Ovary (tissue), 10 donors: ENCODE measurements at regions of chr12 and their contacts with region 1.

Region 1: GRCh38 chr12:79690638-79691493 is at the start of gene PAWR:
- DNase-seq: peak; percentile 71 to 83 (median 78)
- H3K4me3 ChIP-seq: peak within 1 kb of the TSS; percentile 65
- H3K27ac ChIP-seq: peak within 1 kb of the TSS; percentile 92 to 98
- H3K4me1 ChIP-seq: no peaks in the 10 kb centered on the region
- H3K27me3 ChIP-seq: no peaks in the 10 kb centered on the region
- CTCF ChIP-seq: peak in 1 of 3 donors; percentile 25
- EP300 ChIP-seq: no peak
- POLR2A ChIP-seq: peak; percentile 59
- total RNA-seq, gene PAWR: 46.8 to 125 (median 75.6) TPM

Region 2: DNA sequence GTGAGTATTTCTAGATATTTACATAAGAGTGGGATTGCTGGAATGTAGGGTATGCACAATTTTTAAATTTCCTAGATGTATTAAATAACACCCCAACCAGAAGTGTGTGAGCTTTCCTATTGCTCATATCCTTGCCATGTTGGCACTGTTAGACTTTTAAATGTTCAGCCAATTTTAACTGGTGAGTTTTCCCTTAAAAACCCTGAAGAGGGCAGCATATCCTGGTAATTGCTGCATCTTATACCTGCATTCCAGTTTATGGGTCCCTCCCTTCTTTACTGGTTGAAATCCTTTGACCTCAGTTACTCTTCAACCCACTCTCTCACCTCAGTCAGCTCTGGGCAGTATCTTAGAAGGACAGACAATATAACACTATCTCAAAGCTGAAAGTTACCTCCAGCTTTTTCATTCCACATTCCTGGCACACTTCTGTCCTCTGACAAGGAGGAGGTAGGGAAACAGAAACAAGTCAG is 270.7 kb before region 1 on chr12:
- intact Hi-C with region 1: loop called in 1 of 4 experiments (anchors 10 kb)
- DNase-seq: no peak
- H3K4me3 ChIP-seq: no peak overlapping the region
- H3K27ac ChIP-seq: peak overlapping the region in 1 of 2 donors; percentile 38
- H3K4me1 ChIP-seq: peaks cover 9% of the 10 kb centered on the region
- H3K27me3 ChIP-seq: no peaks in the 10 kb centered on the region
- CTCF ChIP-seq: peak in 2 of 3 donors; percentile 39 to 54
- EP300 ChIP-seq: no peak
- POLR2A ChIP-seq: no peak

Region 3: DNA sequence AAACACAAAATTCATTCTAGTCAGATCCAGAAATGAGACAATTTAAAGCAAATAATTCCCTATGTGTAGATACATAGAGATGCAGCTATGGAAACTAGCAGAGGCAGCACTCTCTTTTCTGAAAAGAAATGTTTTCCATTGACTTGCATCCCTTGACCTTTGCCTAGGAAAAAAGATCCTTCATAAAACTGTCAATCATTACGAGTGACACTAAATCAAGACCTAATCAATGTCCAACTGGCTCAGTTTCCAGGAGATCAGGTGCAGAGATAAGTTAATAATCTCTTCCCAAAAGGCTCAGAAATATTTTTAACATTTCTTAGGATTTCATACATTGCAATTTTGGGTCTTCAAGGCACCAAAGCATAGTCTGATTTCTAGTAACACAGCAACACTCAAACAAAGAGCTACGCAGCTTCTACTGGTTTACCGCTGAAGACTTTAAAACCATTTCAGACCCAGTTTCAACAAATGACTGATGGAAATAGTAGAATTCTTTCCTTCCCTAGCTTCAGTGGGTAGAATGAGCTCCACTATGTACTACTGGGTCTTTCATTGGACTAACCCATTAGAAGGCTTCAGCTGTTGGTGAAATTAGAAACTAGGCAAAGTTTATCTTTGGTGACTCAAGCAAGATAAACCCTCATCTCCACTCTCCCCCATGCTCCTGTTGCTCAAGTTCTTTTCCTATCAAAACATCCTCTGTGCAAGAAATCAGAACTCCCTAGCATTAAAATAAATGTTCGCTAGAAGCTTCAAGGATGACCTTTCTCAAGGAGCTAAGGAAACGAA is 159.5 kb before region 1 on chr12:
- intact Hi-C with region 1: no loop called
- DNase-seq: no peak
- H3K4me3 ChIP-seq: no peak overlapping the region
- H3K27ac ChIP-seq: no peak overlapping the region
- H3K4me1 ChIP-seq: no peaks in the 10 kb centered on the region
- H3K27me3 ChIP-seq: no peaks in the 10 kb centered on the region
- CTCF ChIP-seq: no peak
- EP300 ChIP-seq: no peak
- POLR2A ChIP-seq: no peak

Region 4: DNA sequence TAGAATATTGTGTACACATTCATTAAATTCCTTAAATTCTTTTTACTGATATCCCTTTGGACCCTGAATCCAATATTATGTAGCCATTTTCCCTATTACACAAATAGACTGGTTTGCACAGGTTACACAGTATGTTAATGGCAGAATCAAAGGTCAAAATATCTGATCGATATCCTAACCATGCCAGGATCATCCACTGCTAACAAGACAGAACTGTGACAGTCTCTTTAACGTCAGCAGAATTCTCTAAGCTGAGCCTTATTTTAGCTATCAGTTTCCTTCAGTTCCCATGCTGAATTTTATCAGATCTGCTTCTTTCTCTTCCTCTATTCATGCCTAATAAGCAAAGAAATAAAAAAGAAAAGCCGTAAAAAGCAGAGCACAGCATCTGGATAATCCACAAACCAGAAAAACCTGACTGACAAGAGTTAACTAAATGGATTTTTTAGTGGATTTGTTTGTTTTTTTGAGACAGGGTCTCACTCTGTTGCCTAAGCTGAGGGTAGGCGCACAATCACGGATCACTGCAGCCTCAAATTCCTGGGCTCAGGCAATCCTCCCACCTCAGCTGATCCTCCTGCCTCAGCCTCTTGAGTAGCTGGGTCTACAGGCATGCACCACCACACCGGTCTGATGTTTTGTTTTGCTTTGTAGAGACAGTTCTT is 130.5 kb before region 1 on chr12:
- intact Hi-C with region 1: loop called in 3 of 4 experiments (anchors 5 kb)
- DNase-seq: no peak
- H3K4me3 ChIP-seq: no peak overlapping the region
- H3K27ac ChIP-seq: peak overlapping the region in 1 of 2 donors; percentile 35
- H3K4me1 ChIP-seq: peaks cover 10% of the 10 kb centered on the region
- H3K27me3 ChIP-seq: no peaks in the 10 kb centered on the region
- CTCF ChIP-seq: no peak
- EP300 ChIP-seq: no peak
- POLR2A ChIP-seq: no peak